Head of caudate nucleus (tissue), 42 donors: ENCODE measurements at regions of chr6 and their contacts with region 1.

Region 1: DNA sequence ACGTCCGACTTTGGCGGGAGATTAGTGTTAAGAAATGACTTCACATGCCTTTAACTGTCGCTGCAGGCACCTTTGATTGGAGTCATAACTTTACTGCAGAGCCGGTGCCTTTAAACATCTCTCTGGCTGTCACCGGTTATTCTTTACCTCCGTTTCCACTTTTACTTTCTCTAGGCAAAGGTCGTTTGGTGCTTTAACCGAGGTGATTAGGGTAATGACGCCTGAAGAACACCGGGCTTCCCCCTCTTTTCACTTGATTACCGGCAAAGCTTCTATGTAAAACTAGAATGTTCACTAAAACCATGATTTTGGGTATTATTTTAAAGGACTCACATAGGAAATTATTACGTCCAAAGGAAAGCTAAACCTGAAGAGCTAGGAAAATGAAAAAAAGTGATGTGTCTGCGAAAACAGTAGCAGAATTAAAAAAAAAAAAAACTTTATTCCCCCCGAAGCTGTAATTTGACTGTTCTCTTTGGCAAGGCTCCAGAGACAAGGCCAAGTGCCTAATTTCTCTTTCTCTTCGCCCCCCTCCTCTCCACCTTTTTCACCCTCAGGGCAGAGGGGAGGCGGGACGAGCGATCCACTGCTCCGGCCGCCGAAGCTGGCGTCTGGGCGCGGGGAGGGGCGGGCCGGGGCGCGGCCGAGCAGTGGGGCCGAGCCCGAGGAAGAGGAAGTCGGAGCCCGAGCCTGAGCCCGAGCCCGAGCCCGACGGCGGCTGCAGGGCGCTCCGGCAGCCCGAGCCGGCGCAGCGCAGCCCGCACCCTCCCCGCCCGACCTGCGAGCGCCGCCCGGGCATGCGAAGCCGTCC is at the start of gene PLEKHG1:
- DNase-seq: peak in 38 of 42 donors; percentile 10 to 66 (median 31)

Region 2: GRCh38 chr6:150732765-150733539 is 133.5 kb after region 1 on chr6:
- intact Hi-C with region 1: loop called (anchors 10 kb)
- DNase-seq: peak in 1 of 42 donors; percentile 33